Heart left ventricle (tissue), 16 donors: ENCODE measurements at regions of chr9 and their contacts with region 1.

Region 1: GRCh38 chr9:70413798-70414775 is at the start of gene KLF9:
- DNase-seq: peak; percentile 93 to 97 (median 95)
- ATAC-seq: peak; percentile 77 to 82 (median 80)
- H3K4me3 ChIP-seq: peak within 1 kb of the TSS; percentile 76 to 99 (median 90)
- H3K27ac ChIP-seq: peak within 1 kb of the TSS; percentile 98 to 100 (median 100)
- H3K4me1 ChIP-seq: peaks cover 10 to 64% (median 53%) of the 10 kb centered on the region in 12 donors
- H3K27me3 ChIP-seq: no peaks in the 10 kb centered on the region
- CTCF ChIP-seq: no peak
- POLR2A ChIP-seq: peak; percentile 48 to 97
- total RNA-seq, gene KLF9: 28.7 to 74.8 (median 46.0) TPM

Region 2: DNA sequence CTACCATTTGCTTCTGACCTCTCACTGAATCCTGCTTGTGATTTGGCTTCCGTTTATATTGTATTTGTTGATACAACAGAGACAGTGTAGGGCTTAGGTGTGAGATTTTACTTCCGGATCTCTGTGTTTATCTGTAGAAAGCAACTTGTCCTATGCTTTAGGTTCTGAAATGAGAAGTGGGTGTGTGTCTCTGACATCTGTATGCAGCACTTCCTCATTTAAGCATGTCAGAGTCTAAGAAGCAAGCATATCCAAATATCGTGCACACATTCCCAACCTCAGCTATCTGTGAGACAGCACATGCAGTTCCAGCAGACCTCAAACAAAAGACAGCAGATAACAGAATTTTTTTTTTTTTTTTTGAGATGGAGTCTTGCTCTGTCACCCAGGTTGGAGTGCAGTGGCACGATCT is 15.9 kb before region 1 on chr9:
- intact Hi-C with region 1: loop called in 1 of 10 experiments (anchors 2 kb)
- DNase-seq: no peak
- ATAC-seq: peak; percentile 52 to 75 (median 66)
- H3K4me3 ChIP-seq: peak overlapping the region in 1 of 12 donors; percentile 6
- H3K27ac ChIP-seq: peak overlapping the region in 11 of 12 donors; percentile 6 to 72 (median 43)
- H3K4me1 ChIP-seq: peaks cover 45 to 99% (median 93%) of the 10 kb centered on the region in 12 donors
- H3K27me3 ChIP-seq: no peaks in the 10 kb centered on the region
- CTCF ChIP-seq: no peak
- POLR2A ChIP-seq: no peak

Region 3: DNA sequence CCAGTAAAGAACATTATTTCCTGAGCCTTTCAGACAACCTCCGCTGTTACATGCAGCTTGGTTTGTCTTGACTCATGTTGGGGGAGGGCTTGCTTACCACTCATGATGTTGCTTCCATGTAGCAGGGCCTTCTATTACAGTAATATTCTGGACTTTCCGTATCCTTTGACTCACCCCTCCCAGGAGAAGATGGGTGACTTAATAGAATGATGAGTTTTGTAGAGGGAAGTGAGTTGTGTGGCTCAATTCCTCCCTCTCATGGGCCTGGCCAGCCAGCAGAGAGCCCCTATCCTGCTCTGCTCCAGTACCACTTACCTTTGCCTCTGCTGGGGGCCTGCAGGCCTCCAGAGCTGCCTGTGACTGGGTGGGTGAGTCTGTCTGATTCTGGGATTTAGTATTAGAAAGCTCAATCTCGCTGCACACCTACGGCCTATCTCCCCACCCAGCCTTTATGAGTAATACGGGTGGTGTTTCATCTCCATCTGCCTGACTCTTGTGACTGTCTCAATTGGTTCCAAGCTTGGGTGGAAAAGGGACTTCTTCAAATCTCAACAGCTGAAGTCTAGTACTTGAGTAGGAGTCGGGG is 53.0 kb after region 1 on chr9:
- intact Hi-C with region 1: no loop called
- DNase-seq: no peak
- ATAC-seq: peak in 2 of 4 donors; percentile 31 to 40
- H3K4me3 ChIP-seq: no peak overlapping the region
- H3K27ac ChIP-seq: peak overlapping the region in 4 of 12 donors; percentile 1 to 78 (median 70)
- H3K4me1 ChIP-seq: peaks cover 15 to 59% (median 36%) of the 10 kb centered on the region in 12 donors
- H3K27me3 ChIP-seq: no peaks in the 10 kb centered on the region
- CTCF ChIP-seq: no peak
- POLR2A ChIP-seq: no peak

Region 4: DNA sequence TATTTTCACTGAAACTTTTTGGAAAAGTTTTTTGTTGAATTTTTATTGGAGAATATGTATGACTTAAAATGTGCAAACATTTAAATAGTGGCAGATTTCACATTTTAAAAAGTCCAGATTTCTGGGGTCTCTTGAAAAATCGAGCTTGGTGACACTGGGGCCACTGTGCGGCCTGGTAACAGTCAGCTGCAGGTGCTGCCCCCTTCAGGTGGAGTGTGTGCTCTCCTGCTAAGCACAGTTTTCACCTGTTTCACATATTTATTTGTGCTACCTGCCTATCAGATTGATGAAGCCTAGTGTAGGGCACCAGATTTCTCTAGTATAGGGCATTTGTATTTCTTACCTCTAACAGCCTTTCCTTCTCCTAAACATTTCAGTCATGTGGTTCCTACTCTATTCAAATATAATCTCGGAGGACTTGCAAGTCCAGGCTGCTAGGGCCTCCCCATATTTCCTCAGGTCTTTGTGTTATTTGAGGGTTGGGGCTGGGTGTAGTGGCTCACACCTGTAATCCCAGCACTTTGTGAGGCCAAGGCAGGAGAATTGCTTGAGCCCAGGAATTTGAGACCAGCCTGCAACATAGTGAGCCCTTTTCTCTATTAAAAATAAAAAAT is 96.2 kb after region 1 on chr9:
- intact Hi-C with region 1: no loop called
- DNase-seq: peak in 2 of 5 donors; percentile 35 to 63
- ATAC-seq: peak in 1 of 4 donors; percentile 52
- H3K4me3 ChIP-seq: no peak overlapping the region
- H3K27ac ChIP-seq: no peak overlapping the region
- H3K4me1 ChIP-seq: peaks cover 0 to 8% (median 0%) of the 10 kb centered on the region in 12 donors
- H3K27me3 ChIP-seq: no peaks in the 10 kb centered on the region
- CTCF ChIP-seq: peak; percentile 25 to 77 (median 52)
- POLR2A ChIP-seq: no peak

Region 5: GRCh38 chr9:72334658-72335337 is 1920.7 kb after region 1 on chr9:
- intact Hi-C with region 1: no loop called
- DNase-seq: no peak
- ATAC-seq: no peak
- H3K4me3 ChIP-seq: no peak overlapping the region
- H3K27ac ChIP-seq: no peak overlapping the region
- H3K4me1 ChIP-seq: no peaks in the 10 kb centered on the region
- H3K27me3 ChIP-seq: no peaks in the 10 kb centered on the region
- CTCF ChIP-seq: no peak
- POLR2A ChIP-seq: no peak